Prostate gland (tissue), 2 donors: ENCODE measurements at regions of chr7 and their contacts with region 1.

Region 1: DNA sequence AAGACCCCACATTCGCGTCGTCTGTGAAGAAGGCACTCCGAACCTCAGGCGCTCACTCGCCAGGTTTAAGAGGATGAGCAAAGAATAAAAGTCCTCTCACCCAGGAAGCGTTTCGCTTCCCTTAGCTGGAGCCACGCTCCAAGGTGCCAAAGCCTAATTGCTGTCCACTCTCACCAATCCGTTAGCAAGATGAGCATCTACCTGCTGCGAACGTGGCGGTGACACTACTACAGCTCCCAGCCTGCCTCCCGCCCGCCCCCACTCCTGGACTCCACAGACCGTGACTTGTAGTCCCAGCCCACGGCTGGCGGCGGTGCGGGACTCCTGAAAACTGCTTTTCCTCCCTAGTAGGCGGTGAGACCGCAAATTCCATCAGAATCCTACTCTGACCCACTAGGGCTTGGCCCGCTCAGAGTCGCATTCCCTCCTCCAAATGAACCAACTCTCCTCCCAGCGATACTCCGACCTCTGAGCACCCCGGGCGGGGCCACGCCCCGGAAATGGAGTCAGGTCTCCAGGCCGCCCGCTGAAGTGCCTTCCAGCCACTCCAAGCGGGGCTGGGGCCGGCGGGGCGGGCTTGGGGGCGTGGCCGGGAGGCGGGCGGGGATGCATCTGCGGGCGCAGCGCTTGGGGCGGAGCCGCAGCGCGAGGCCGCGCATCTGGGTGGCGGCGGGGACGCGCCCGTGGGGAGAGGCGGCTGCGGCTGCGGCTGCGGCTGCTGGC is 521 bp upstream of the PTPN12 start:
- DNase-seq: peak; percentile 98
- H3K4me3 ChIP-seq: peak overlapping the region; percentile 69 to 92
- H3K27ac ChIP-seq: peak overlapping the region; percentile 95 to 96
- H3K4me1 ChIP-seq: no peaks in the 10 kb centered on the region
- H3K27me3 ChIP-seq: no peaks in the 10 kb centered on the region
- CTCF ChIP-seq: peak in 1 of 4 experiments; percentile 5
- POLR2A ChIP-seq: peak; percentile 99

Region 2: GRCh38 chr7:77226357-77226839 is 310.2 kb before region 1 on chr7:
- intact Hi-C with region 1: no loop called
- DNase-seq: no peak
- H3K4me3 ChIP-seq: no peak overlapping the region
- H3K27ac ChIP-seq: no peak overlapping the region
- H3K4me1 ChIP-seq: no peaks in the 10 kb centered on the region
- H3K27me3 ChIP-seq: no peaks in the 10 kb centered on the region
- CTCF ChIP-seq: no peak
- POLR2A ChIP-seq: no peak

Region 3: DNA sequence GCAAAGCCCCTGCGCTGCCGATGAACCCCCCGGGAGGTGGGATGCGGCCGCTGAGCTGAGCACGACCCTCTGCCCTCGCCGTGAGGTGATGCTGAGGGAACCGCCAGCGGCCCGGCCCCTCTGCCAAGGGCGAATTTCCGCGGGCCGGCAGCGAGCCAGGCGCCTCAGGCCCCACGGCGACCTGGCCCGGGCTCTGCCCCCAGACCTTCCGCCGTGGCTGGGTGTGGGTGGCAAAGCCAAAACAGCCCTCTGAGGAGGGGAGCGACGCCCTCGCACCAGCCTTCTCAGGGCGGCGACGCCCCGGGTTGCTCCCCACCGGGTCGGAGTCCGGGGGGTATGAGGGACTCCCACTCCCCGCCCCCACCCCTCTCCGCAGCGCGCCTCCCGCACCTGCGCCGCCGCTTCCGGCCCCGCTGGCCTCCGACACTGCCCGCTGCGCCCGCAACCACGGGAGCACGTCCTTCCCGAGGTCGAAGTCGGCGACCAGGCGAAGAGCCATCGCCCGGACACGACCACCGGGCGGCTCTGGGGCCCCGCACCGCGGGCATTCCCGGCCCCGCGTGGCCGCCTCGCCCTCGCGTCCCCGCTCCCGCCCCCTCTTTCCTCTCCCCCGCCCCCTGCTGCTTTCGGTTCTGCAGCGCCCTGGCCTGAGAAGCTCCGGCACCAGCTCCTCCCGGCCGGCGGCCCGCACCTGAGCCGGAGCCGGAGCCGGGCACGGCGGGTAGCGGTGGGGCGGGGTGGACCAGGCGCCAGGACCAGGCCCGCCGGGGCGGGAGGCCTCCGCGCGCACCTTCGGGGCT is 120.6 kb before region 1 on chr7 and contains the start of gene GSAP:
- intact Hi-C with region 1: loop called (anchors 2 kb)
- DNase-seq: peak; percentile 63
- H3K4me3 ChIP-seq: peak within 1 kb of the TSS; percentile 70 to 94
- H3K27ac ChIP-seq: peak within 1 kb of the TSS; percentile 85
- H3K4me1 ChIP-seq: no peaks in the 10 kb centered on the region
- H3K27me3 ChIP-seq: no peaks in the 10 kb centered on the region
- CTCF ChIP-seq: no peak
- POLR2A ChIP-seq: no peak
- total RNA-seq, gene GSAP: 10.0 to 13.0 TPM

Region 4: DNA sequence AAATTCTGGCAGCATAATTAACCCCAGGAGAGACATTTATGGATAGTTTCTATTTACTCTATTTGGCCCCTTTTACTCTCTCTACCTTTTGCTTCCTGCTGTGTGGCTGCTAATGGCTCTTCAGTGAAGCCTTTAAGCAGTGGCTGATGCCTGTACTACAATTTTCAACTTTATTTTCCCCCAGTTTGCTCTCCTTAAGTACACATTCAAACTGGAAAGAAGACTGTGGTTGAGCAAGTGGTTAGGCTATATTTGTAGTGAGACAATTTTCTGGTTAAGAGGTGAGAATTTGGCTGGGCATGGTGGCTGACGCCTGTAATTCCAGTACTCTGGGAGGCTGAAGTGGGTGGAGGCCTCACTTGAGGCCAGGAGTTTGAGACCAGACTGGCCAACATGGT is 151.2 kb after region 1 on chr7:
- intact Hi-C with region 1: loop called (anchors 2 kb)
- DNase-seq: no peak
- H3K4me3 ChIP-seq: no peak overlapping the region
- H3K27ac ChIP-seq: no peak overlapping the region
- H3K4me1 ChIP-seq: no peaks in the 10 kb centered on the region
- H3K27me3 ChIP-seq: no peaks in the 10 kb centered on the region
- CTCF ChIP-seq: no peak
- POLR2A ChIP-seq: no peak

Region 5: DNA sequence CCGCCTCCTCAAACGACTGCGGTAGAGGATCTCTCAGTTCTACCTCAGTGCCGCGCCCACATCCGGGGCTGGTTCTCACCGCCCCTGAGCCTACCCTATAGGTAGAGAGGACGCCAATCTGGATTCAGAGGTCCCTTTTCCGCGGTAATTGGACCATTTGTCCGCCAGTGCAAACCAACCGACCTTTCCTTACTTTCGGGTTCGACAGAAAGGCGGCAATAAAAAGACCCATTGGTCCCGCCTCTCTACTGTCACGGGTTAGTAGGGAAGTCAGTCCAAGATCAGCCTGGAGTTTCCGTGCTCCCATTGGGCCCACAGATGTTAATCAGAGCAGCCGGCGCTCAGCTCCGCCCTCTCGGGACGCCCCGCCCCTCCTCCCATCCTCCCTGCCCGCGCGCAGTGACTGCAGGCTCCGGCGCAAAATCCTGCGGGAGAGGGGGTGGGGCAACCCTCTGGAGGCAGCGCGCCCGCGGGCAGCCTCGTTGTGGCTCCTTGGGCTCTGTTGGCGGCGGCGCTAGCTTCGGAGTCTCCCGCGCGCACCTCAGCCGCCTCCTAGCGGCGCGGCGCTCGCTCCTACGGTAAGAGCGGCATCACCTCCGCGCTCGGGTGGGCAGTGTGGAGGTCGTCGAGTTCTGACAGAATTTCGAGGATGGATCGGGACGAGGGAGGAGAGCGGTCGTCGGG is 262.0 kb after region 1 on chr7 and contains the starts of genes PHTF2 and TMEM60:
- intact Hi-C with region 1: loop called (anchors 5 kb)
- DNase-seq: peak; percentile 99
- H3K4me3 ChIP-seq: peak within 1 kb of the TSS; percentile 84 to 88
- H3K27ac ChIP-seq: peak within 1 kb of the TSS; percentile 86 to 88
- H3K4me1 ChIP-seq: peaks cover 12% of the 10 kb centered on the region
- H3K27me3 ChIP-seq: no peaks in the 10 kb centered on the region
- CTCF ChIP-seq: peak in 3 of 4 experiments; percentile 60 to 67 (median 62)
- POLR2A ChIP-seq: peak; percentile 90
- total RNA-seq, gene PHTF2: 7.7 to 17.3 TPM
- total RNA-seq, gene TMEM60: 17.5 to 20.6 TPM